BJ (cell line): ENCODE measurements at regions of chr19 and their contacts with region 1.

Region 1: DNA sequence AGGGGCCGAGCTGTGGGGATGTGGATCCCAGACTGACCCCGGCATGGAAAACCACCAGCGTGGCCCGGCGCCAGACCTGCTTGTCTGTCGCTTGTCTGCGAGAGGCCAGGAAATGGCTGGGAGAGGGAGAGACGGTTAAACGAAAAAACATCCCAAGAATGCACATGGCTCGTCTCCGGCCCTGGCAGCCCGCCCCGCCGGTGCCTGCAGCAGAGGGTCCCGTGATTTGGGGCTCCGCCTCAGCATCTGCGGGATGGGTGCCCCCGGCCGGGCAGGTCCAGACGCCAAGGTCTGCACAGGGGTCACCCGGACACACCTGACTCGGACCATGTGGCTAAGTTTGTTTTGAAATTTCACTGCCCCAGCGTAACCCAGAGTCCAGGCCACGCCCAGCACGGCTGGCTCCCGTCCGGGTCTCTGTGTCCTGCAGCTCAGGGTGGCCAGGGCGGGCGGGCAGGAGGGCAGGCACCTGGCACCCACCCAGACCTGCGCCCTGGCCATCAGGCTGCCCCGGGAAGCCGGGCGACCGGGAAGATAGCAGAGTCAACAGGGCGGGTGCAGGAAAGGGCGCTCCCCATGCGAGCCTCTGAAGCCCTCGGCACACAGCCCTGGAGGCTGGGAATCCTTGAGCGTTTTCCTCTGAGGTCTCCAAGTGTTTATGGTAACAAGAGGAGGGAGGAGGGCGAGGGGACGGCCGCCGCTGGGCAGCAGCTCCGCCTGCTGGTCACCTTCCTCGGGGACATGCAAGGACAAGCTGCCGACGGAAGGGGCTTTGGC is 103.2 kb downstream of the GADD45B start:
- DNase-seq: peak; percentile 65
- H3K4me3 ChIP-seq: peak overlapping the region; percentile 40
- H3K27me3 ChIP-seq: no peaks in the 10 kb centered on the region
- CTCF ChIP-seq: peak; percentile 98

Region 2: GRCh38 chr19:2415281-2415972 is 163.7 kb before region 1 on chr19:
- CTCF ChIA-PET with region 1: no interaction called
- POLR2A ChIA-PET with region 1: no interaction called
- DNase-seq: no peak
- H3K4me3 ChIP-seq: no peak overlapping the region
- H3K27me3 ChIP-seq: no peaks in the 10 kb centered on the region
- CTCF ChIP-seq: no peak

Region 3: GRCh38 chr19:2469102-2469914 is 109.8 kb before region 1 on chr19:
- CTCF ChIA-PET with region 1: interaction called, 28 read pairs
- POLR2A ChIA-PET with region 1: no interaction called
- DNase-seq: no peak
- H3K4me3 ChIP-seq: no peak overlapping the region
- H3K27me3 ChIP-seq: no peaks in the 10 kb centered on the region
- CTCF ChIP-seq: no peak

Region 4: DNA sequence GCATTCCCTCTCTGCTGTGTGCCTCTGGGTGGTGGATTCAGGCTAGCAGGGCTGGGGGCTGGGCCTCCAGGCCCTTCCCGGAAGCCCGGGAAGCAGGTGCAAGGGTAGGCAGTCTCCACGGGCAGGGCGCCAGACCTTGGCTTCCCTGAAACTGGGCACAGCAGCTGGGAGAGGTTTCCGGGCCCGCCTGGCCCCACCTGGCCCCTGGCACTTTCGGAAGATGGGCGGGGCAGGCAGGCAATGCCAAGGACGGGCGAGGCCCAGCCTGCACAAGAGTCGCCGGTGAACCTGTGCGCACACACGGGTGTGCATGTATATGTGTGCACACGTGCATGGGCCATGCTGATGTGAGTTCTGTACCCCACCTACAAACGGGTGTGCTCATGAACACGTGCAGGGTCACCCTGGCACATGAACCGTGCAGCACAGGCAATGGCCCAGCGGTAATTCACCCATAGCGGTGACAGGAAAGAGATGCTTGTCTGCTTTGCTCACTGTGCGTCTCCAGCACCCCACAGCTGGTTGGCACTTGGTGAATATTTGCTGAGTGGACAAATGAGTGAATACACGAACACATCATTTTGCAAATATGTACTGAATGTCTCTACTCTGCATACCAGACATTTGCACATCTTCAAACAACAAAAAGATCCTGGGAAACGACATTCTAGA is 87.8 kb before region 1 on chr19:
- CTCF ChIA-PET with region 1: interaction called, 12 read pairs
- POLR2A ChIA-PET with region 1: interaction called, 4 read pairs
- DNase-seq: no peak
- H3K4me3 ChIP-seq: no peak overlapping the region
- H3K27me3 ChIP-seq: no peaks in the 10 kb centered on the region
- CTCF ChIP-seq: no peak

Region 5: DNA sequence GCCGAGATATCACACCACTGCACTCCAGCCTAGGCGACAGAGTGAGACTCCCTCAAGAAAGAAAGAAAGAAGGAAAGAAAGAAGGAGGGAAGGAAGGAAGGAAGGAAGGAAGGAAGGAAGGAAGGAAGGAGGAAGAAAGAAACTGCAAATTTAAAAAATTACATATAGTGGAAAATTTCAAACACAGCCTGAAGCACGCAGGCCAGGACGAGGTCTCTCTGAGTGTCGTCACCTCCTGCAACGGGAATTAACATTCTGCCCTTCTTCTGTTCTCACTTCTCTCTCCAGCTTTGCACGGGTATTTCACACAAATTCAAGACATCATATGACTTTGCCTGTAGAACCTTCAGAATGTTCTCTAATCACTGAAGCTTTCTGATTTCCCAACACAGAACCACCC is 15.2 kb after region 1 on chr19:
- CTCF ChIA-PET with region 1: interaction called, 32 read pairs
- POLR2A ChIA-PET with region 1: no interaction called
- DNase-seq: no peak
- H3K4me3 ChIP-seq: no peak overlapping the region
- H3K27me3 ChIP-seq: peaks cover 4% of the 10 kb centered on the region; the same call in 1 of the 2 replicates
- CTCF ChIP-seq: no peak

Region 6: GRCh38 chr19:2610637-2611482 is 31.8 kb after region 1 on chr19:
- CTCF ChIA-PET with region 1: interaction called, 34 read pairs
- POLR2A ChIA-PET with region 1: no interaction called
- DNase-seq: peak; percentile 60
- H3K4me3 ChIP-seq: peak overlapping the region; percentile 30
- H3K27me3 ChIP-seq: no peaks in the 10 kb centered on the region
- CTCF ChIP-seq: peak; percentile 98